H1 (cell line): ENCODE measurements at regions of chr12 and their contacts with region 1.

Region 1: DNA sequence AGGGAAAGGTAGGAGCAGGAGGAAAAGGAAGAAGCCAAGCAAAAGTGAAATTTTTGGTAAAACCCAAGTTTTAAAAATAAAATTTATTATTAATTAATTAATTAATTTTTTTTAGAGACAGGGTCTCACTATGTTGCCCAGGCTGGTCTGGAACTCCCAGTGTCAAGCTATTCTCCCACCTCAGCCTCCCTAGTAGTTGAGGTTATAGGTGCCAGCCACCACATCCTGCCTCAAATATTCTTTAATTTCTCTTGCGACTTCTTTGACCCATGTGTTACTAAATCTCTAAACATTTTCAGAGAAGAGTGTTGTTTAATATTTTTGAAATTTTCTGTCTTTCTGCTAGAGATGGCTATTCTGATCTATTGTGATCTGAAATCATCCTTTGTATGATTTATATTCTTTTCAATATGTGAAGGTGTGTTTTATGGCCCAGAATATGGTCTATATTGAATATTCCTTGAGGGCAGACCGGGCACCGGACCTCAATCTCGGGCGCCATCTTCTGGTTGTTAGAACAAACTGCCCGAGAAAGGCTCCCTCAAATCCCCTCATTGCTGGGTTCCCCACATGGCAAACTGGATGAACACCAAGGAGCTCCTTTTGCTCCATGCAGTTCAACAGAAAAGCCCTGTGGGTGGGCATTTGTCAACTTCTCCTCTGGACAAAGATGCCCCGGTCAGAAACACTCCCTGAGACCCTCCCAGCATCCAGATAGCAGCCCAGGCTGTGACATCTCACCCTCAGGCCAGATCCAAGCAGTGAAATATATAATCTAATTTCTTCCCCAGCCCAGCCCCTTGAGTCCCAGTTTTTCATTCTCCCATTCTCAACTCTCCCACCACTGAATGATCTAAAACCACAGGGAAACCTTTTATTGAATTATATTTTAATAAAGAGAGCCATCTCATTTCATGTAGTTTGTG is 110.5 kb downstream of the ASCL4 start:
- DNase-seq: peak in 1 of 2 experiments; percentile 63
- H3K4me3 ChIP-seq: no peak overlapping the region
- H3K27ac ChIP-seq: no peak overlapping the region
- H3K4me1 ChIP-seq: no peaks in the 10 kb centered on the region
- H3K27me3 ChIP-seq: peaks cover 0 to 2% (median 0%) of the 10 kb centered on the region in 4 experiments; a peak in 1 of 7 replicates
- CTCF ChIP-seq: peak; percentile 65 to 80 (median 75)
- EP300 ChIP-seq: no peak
- POLR2A ChIP-seq: no peak
- RAD21 ChIP-seq: peak; percentile 88

Region 2: DNA sequence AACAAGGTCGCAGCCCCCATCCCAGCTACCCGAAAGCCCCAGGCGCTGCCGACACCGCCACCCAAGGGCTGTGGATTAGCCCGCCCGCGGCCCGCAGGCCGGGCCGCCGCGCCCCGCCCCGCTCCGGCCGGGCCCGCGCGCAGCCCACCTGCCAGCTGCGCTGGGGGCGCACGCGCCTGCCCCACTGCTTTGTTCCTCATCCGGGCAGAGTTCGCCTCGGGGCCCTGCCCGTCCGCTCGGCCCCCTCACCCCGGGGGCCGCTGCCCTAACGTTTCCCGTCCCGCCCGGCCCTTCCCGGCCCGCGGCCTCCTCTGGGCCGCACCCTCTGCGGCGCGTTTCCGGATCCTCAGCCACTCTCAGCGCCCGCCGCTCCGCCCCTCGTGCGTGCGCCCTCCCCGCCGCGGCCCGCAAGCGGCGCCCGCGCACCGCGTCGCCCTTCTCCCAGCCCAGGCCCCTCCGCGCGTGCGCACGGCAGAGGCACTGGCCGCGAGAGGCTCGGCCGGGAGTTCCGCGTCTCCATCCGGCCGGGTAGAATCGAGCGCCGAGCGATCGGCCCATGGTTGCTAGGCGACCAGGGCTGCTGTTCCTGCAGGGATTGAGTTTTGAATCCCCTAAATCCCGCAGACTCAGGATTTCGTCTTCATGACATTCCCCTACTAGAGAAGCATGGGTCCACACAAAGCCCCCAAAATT is 124.1 kb before region 1 on chr12 and contains the start of gene PRDM4:
- CTCF ChIA-PET with region 1: interaction called, 22 read pairs
- POLR2A ChIA-PET with region 1: interaction called, 3 read pairs
- DNase-seq: peak; percentile 81 to 90
- H3K4me3 ChIP-seq: peak within 1 kb of the TSS; percentile 77 to 87 (median 82)
- H3K27ac ChIP-seq: peak within 1 kb of the TSS; percentile 68
- H3K4me1 ChIP-seq: peaks cover 0 to 8% (median under 1%) of the 10 kb centered on the region in 4 experiments; a peak in 3 of 7 replicates
- H3K27me3 ChIP-seq: no peaks in the 10 kb centered on the region
- CTCF ChIP-seq: peak; percentile 62 to 85 (median 62)
- EP300 ChIP-seq: 0 out of 3 replicates have a peak, but pooled peaks of 1 of the 2 experiments have one; percentile 12
- POLR2A ChIP-seq: peak in 1 of 2 experiments; percentile 58; a peak in 1 of 3 replicates
- RAD21 ChIP-seq: peak; percentile 67 to 93
- total RNA-seq, gene PRDM4: 17.2 and 17.5 TPM in 2 replicates

Region 3: GRCh38 chr12:107775093-107775721 is 109.8 kb before region 1 on chr12:
- CTCF ChIA-PET with region 1: interaction called, 13 read pairs
- POLR2A ChIA-PET with region 1: no interaction called
- DNase-seq: peak; percentile 62 to 85
- H3K4me3 ChIP-seq: peak overlapping the region; percentile 31 to 68 (median 50)
- H3K27ac ChIP-seq: no peak overlapping the region
- H3K4me1 ChIP-seq: peaks cover 0 to 3% (median 0%) of the 10 kb centered on the region in 4 experiments; a peak in 2 of 7 replicates
- H3K27me3 ChIP-seq: peaks cover 21 to 49% (median 44%) of the 10 kb centered on the region in 4 experiments
- CTCF ChIP-seq: peak; percentile 53 to 68 (median 58)
- EP300 ChIP-seq: no peak
- POLR2A ChIP-seq: no peak
- RAD21 ChIP-seq: peak; percentile 45 to 49

Region 4: GRCh38 chr12:107864235-107864634 is 20.8 kb before region 1 on chr12:
- CTCF ChIA-PET with region 1: interaction called, 16 read pairs
- POLR2A ChIA-PET with region 1: interaction called, 3 read pairs
- DNase-seq: peak in 1 of 2 experiments; percentile 63
- H3K4me3 ChIP-seq: peak overlapping the region; percentile 39 to 72 (median 64)
- H3K27ac ChIP-seq: no peak overlapping the region
- H3K4me1 ChIP-seq: no peaks in the 10 kb centered on the region
- H3K27me3 ChIP-seq: peaks cover 3 to 18% (median 10%) of the 10 kb centered on the region in 4 experiments; a peak in 6 of 7 replicates
- CTCF ChIP-seq: no peak
- EP300 ChIP-seq: no peak
- POLR2A ChIP-seq: no peak
- RAD21 ChIP-seq: no peak

Region 5: GRCh38 chr12:107912421-107913004 is 27.5 kb after region 1 on chr12:
- CTCF ChIA-PET with region 1: interaction called, 22 read pairs
- POLR2A ChIA-PET with region 1: interaction called, 3 read pairs
- DNase-seq: peak in 1 of 2 experiments; percentile 98
- H3K4me3 ChIP-seq: peak overlapping the region; percentile 36 to 77 (median 66); a peak in 7 of 8 replicates
- H3K27ac ChIP-seq: no peak overlapping the region
- H3K4me1 ChIP-seq: no peaks in the 10 kb centered on the region; a peak in 1 of 7 replicates
- H3K27me3 ChIP-seq: peaks cover 0 to 2% (median 0%) of the 10 kb centered on the region in 4 experiments; a peak in 3 of 7 replicates
- CTCF ChIP-seq: peak; percentile 96 to 98 (median 98)
- EP300 ChIP-seq: no peak
- POLR2A ChIP-seq: no peak
- RAD21 ChIP-seq: peak; percentile 47 to 59